Activated naive CD8-positive, alpha-beta T cell treated with anti-CD3 and anti-CD28 coated beads, Interleukin-2, amount 10 ng/mL, durations not matched to agents 7 days and 5 days (primary cell): ENCODE measurements at regions of chr22 and their contacts with region 1.

Region 1: GRCh38 chr22:36387752-36388518 is at the start of gene MYH9:
- DNase-seq: peak; percentile 99
- ATAC-seq: peak; percentile 80
- H3K4me3 Mint-ChIP-seq: peak within 1 kb of the TSS; percentile 98
- H3K27ac Mint-ChIP-seq: peak within 1 kb of the TSS; percentile 94
- H3K4me1 Mint-ChIP-seq: peaks cover 31% of the 10 kb centered on the region
- H3K27me3 Mint-ChIP-seq: no peaks in the 10 kb centered on the region
- total RNA-seq, gene MYH9: 803 to 821 TPM

Region 2: DNA sequence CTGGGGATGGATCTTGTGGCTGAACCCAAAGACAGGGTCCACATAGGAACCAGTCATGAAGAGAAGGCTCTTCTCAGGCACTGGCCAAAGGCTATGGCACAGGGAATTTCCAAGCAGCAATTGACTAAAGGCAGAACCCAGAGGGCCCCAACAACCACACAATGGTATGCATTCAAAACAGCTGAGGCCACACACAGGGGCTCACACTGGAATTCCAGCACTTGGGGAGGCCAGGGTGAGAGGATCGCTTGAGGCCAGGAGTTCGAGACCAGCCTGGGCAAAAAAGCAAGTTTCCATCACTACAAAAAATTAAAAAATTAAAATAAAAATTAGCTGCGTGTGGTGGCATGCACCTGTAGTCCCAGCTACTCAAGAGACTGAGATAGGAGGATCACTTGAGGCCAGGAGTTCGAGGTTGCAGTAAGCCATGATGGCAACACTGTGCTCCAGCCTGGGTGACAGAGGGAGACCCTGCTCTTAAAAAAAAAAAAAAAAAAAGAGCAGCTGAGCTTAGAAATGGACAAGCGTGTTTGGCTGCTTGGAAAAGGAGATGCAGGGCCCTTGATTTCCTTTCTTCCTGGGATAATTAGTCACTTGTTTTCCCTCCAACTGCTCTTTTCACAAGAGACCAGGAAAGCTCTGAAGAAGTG is 44.7 kb before region 1 on chr22:
- POLR2A ChIA-PET with region 1: no interaction called
- DNase-seq: no peak
- ATAC-seq: no peak
- H3K4me3 Mint-ChIP-seq: no peak overlapping the region
- H3K27ac Mint-ChIP-seq: peak overlapping the region; percentile 42
- H3K4me1 Mint-ChIP-seq: peaks cover 60% of the 10 kb centered on the region
- H3K27me3 Mint-ChIP-seq: no peaks in the 10 kb centered on the region

Region 3: GRCh38 chr22:36369922-36370791 is 17.8 kb before region 1 on chr22:
- POLR2A ChIA-PET with region 1: interaction called, 132 read pairs
- DNase-seq: no peak
- ATAC-seq: peak; percentile 44
- H3K4me3 Mint-ChIP-seq: peak overlapping the region; percentile 91
- H3K27ac Mint-ChIP-seq: peak overlapping the region; percentile 96
- H3K4me1 Mint-ChIP-seq: peaks cover 86% of the 10 kb centered on the region
- H3K27me3 Mint-ChIP-seq: no peaks in the 10 kb centered on the region

Region 4: GRCh38 chr22:36405671-36406538 is 18.0 kb after region 1 on chr22:
- POLR2A ChIA-PET with region 1: interaction called, 12 read pairs
- DNase-seq: peak; percentile 55
- ATAC-seq: peak; percentile 59
- H3K4me3 Mint-ChIP-seq: peak overlapping the region; percentile 57
- H3K27ac Mint-ChIP-seq: peak overlapping the region; percentile 95
- H3K4me1 Mint-ChIP-seq: peaks cover 32% of the 10 kb centered on the region
- H3K27me3 Mint-ChIP-seq: no peaks in the 10 kb centered on the region

Region 5: DNA sequence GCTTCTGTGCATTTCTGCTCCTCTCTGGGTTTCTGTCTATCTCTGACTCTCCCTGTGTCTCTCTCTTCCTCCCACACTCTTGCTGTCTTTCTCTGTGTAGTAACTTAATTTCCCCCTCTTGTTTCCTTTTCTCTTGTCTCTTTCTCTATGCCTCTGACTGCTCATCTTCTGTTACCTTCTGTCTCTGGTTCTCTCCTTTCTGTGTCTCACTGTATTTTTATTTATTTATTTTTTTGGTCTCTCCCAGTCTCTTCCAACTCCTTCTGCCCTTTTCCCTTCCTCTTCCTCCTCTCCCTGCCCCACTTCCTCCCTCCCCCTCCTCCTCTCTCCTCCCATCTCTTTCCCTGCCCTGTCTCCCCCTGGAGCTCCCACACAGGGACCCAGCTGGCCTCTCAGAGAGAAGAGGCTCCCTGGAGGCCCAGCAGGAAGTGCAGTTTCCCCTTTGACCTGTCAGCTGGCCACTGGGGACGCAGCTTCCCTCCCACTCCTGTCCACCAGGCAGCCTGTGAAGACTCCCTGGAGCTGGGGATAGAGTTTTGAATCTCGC is 38.1 kb after region 1 on chr22:
- POLR2A ChIA-PET with region 1: no interaction called
- DNase-seq: no peak
- ATAC-seq: no peak
- H3K4me3 Mint-ChIP-seq: peak overlapping the region; percentile 58
- H3K27ac Mint-ChIP-seq: peak overlapping the region; percentile 86
- H3K4me1 Mint-ChIP-seq: peaks cover 24% of the 10 kb centered on the region
- H3K27me3 Mint-ChIP-seq: no peaks in the 10 kb centered on the region

Region 6: GRCh38 chr22:36454916-36455570 is 67.1 kb after region 1 on chr22:
- POLR2A ChIA-PET with region 1: interaction called, 13 read pairs
- DNase-seq: peak; percentile 98
- ATAC-seq: peak; percentile 73
- H3K4me3 Mint-ChIP-seq: peak overlapping the region; percentile 56
- H3K27ac Mint-ChIP-seq: peak overlapping the region; percentile 83
- H3K4me1 Mint-ChIP-seq: peaks cover 49% of the 10 kb centered on the region
- H3K27me3 Mint-ChIP-seq: no peaks in the 10 kb centered on the region